GM12878 (cell line): ENCODE measurements at regions of chr1 and their contacts with region 1.

Region 1: DNA sequence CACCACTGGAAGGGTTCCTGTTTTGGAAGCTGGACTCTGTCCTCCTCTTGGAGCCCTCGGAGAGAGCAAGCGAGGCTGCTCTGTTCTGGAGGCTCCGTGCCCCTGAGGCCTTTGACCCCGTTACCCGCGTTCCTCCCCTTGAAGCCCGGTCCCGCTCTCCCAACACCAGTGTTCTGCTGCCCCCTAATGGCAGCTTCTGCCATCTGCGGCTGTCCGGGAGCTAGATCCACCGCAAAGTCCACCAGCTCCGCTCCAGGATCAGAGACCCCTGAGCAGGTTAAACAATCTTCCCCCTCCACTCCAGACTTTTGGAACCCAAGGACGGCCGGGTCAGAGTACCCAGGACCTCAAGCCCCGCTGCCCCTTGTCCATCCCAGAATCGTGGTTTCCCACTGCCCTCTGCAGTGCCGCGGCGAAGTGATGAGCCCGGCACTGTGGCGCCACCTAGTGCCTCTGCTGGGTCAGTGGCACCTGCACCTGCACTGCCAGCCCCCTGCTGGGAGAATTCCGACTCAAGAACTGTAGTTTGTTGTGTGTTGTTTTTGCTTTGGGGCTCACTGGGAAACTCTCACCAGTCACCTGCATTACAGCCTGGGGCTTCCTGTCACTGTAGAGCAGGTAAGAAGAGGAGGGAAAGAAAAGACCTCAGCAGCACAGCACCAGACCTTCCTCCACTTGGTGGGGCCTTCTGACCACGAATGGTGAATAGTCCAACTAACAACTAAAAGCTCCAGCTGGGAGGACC is 63.5 kb upstream of the NFASC start:
- DNase-seq: peak; percentile 43
- ATAC-seq: peak; percentile 98
- H3K4me3 ChIP-seq: peak overlapping the region; percentile 49; the same call in 1 of the 2 replicates
- H3K27ac ChIP-seq: no peak overlapping the region
- H3K4me1 ChIP-seq: no peaks in the 10 kb centered on the region
- H3K27me3 ChIP-seq: peaks cover 0 to 6% of the 10 kb centered on the region in 2 experiments; a peak in 2 of 4 replicates
- CTCF ChIP-seq: peak; percentile 82 to 98 (median 93)
- EP300 ChIP-seq: no peak
- POLR2A ChIP-seq: no peak
- RAD21 ChIP-seq: peak; percentile 82

Region 2: DNA sequence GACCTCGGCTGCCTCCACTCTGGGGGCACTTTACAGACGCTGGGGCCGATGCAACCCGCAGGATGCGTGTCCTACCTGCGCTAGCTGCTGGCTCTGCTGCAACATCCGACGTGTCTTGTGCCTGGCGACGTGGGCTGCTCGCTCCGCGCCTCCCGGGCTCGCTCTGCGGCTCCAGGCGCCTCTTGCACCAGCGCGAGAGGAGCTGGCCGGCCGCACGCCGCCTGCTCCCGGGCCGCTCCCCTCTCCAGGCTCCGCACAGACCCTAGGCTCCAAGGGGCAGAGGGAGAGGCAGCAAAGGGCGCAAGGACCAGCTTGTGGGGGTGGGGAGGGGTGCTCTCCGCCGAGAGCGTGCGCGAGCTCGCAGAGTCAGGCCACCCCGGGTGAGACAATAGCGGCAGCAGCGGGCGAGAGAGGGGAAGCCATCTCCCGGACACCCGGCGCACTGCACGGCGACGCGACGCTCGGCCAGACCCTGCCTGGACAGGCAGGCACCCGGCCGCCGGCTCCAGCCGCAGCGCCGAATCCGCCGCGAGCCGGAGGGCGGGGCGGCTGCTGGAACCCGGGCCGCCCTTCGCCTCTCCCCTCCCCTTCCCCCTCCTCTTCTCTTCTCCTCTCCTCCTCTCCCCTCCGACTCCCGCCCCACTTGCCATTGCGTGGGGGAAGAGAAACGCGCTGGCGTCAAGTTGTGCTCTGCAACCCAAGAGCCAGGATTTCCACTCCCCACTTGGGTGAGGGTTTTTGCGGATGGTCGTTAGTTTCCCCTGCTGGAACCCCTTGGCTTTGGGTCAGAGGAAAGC is 312.6 kb before region 1 on chr1 and contains the start of gene PIK3C2B:
- CTCF ChIA-PET with region 1: interaction called, 10 read pairs
- POLR2A ChIA-PET with region 1: no interaction called
- RAD21 ChIA-PET with region 1: interaction called, 7 read pairs
- SMC1A ChIA-PET with region 1: interaction called, 4 read pairs
- in situ Hi-C with region 1: no loop called
- intact Hi-C with region 1: no loop called
- DNase-seq: peak; percentile 55
- ATAC-seq: peak; percentile 92
- H3K4me3 ChIP-seq: peak within 1 kb of the TSS; percentile 92
- H3K27ac ChIP-seq: peak within 1 kb of the TSS; percentile 86
- H3K4me1 ChIP-seq: peaks cover 22% of the 10 kb centered on the region
- H3K27me3 ChIP-seq: no peaks in the 10 kb centered on the region
- CTCF ChIP-seq: peak; percentile 37 to 59 (median 43)
- EP300 ChIP-seq: no peak
- POLR2A ChIP-seq: peak; percentile 86
- RAD21 ChIP-seq: peak; percentile 47
- polyA plus RNA-seq, gene PIK3C2B: 2.2 to 5.0 TPM

Region 3: GRCh38 chr1:204560590-204561150 is 246.4 kb before region 1 on chr1:
- CTCF ChIA-PET with region 1: interaction called, 279 read pairs
- POLR2A ChIA-PET with region 1: interaction called, 4 read pairs
- RAD21 ChIA-PET with region 1: interaction called, 81 read pairs
- SMC1A ChIA-PET with region 1: interaction called, 76 read pairs
- in situ Hi-C with region 1: loop called (anchors 5 kb)
- intact Hi-C with region 1: loop called (anchors 1 kb)
- DNase-seq: no peak
- ATAC-seq: no peak
- H3K4me3 ChIP-seq: no peak overlapping the region
- H3K27ac ChIP-seq: no peak overlapping the region
- H3K4me1 ChIP-seq: peaks cover 22% of the 10 kb centered on the region
- H3K27me3 ChIP-seq: no peaks in the 10 kb centered on the region
- CTCF ChIP-seq: no peak
- EP300 ChIP-seq: no peak
- POLR2A ChIP-seq: no peak
- RAD21 ChIP-seq: no peak

Region 4: DNA sequence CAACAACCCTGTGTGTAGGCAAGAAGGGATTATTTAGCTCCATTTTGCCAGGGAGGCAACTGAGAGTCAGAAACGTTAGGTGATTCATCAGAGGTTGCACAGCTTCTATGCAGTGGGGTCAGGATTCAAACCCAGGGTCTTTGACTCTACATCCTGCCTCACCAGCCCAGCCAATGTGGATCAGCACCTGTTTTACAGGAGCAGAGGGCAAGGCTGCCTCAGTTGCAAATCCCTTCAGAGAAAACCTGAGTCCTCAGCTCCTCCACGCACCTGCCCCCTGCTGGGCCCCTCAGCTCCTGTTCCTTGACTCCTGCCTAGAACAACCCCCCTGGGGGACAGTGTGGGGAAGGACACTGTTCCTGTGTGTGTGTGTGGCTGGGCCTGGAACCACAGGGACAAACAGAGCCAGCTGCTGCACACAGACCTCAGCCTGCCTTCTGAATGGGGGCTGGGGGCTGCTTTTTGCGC is 183.2 kb before region 1 on chr1:
- CTCF ChIA-PET with region 1: interaction called, 19 read pairs
- POLR2A ChIA-PET with region 1: no interaction called
- RAD21 ChIA-PET with region 1: interaction called, 6 read pairs
- SMC1A ChIA-PET with region 1: interaction called, 9 read pairs
- in situ Hi-C with region 1: no loop called
- intact Hi-C with region 1: no loop called
- DNase-seq: no peak
- ATAC-seq: peak; percentile 76
- H3K4me3 ChIP-seq: no peak overlapping the region
- H3K27ac ChIP-seq: no peak overlapping the region
- H3K4me1 ChIP-seq: no peaks in the 10 kb centered on the region
- H3K27me3 ChIP-seq: no peaks in the 10 kb centered on the region; a peak in 1 of 4 replicates
- CTCF ChIP-seq: peak; percentile 8 to 39 (median 19); a peak in 4 of 6 replicates
- EP300 ChIP-seq: no peak
- POLR2A ChIP-seq: no peak
- RAD21 ChIP-seq: 0 out of 2 replicates have a peak, but pooled peaks have one; percentile 5

Region 5: GRCh38 chr1:204746838-204747442 is 60.2 kb before region 1 on chr1:
- CTCF ChIA-PET with region 1: interaction called, 15 read pairs
- POLR2A ChIA-PET with region 1: no interaction called
- RAD21 ChIA-PET with region 1: interaction called, 3 read pairs
- SMC1A ChIA-PET with region 1: interaction called, 4 read pairs
- in situ Hi-C with region 1: no loop called
- intact Hi-C with region 1: no loop called
- DNase-seq: no peak
- ATAC-seq: peak; percentile 94
- H3K4me3 ChIP-seq: no peak overlapping the region
- H3K27ac ChIP-seq: no peak overlapping the region
- H3K4me1 ChIP-seq: no peaks in the 10 kb centered on the region
- H3K27me3 ChIP-seq: peaks cover 0 to 1% of the 10 kb centered on the region in 2 experiments; a peak in 1 of 4 replicates
- CTCF ChIP-seq: peak; percentile 78 to 97 (median 97)
- EP300 ChIP-seq: no peak
- POLR2A ChIP-seq: no peak
- RAD21 ChIP-seq: peak; percentile 48

Region 6: DNA sequence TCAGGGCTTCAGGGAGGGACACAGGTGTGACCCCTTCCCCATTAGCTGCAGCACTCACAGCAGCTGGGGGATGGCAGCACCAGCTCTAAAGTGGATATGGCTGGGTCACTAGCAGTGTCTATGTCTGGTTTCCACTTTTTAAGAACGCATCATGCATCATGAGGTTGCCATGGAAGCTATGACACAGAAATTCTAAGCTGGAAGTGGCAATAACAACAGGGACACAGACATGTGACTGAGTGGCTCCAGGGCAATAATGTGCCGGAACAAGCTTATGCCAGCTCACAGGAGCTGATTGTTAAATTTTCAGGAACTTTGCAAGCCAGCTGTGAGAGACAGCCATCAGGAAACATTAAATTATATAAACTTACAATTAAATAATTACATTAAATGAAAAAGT is 12.4 kb after region 1 on chr1:
- CTCF ChIA-PET with region 1: interaction called, 79 read pairs
- POLR2A ChIA-PET with region 1: no interaction called
- RAD21 ChIA-PET with region 1: interaction called, 6 read pairs
- SMC1A ChIA-PET with region 1: interaction called, 4 read pairs
- in situ Hi-C with region 1: no loop called
- intact Hi-C with region 1: no loop called
- DNase-seq: no peak
- ATAC-seq: no peak
- H3K4me3 ChIP-seq: no peak overlapping the region
- H3K27ac ChIP-seq: no peak overlapping the region
- H3K4me1 ChIP-seq: no peaks in the 10 kb centered on the region
- H3K27me3 ChIP-seq: no peaks in the 10 kb centered on the region; a peak in 1 of 4 replicates
- CTCF ChIP-seq: no peak
- EP300 ChIP-seq: no peak
- POLR2A ChIP-seq: no peak
- RAD21 ChIP-seq: no peak